ENCODE measurements at regions of chr10 and their contacts with region 1.

Region 1: DNA sequence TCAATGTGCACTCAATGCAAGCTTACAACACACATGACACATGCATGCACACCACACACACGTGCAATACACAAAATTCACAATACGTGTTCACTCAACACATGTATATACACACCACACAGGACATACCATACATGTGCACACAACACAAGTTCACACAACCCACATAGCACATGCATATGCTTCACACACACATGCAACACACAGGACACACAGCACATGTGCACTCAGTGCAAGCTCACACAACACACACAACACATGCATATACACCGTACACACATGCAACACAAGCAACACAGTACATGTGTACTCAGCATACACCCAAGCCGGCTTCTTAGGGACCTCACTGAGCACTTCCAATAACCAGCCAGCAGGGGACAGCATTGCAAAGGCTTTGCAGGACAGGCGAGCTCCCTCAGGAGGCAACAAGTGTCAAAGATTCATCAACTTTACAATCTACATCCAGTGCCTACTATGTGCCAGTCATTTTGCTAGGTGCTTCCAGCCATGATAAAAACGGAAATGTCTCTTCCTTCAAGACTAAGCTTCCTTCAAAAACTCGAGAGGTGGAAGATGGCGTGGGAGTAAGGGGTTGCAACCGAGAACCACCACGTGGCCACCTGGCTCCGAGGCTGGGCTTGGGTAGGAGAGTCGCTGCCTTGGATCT is 61.1 kb downstream of the JCAD start:
- DNase-seq: peak; percentile 74 to 86
- ATAC-seq: peak; percentile 18 to 23
- H3K4me3 ChIP-seq: no peak overlapping the region
- H3K27ac ChIP-seq: peak overlapping the region; percentile 30 to 98 (median 92)
- H3K4me1 ChIP-seq: peaks cover 60 to 66% of the 10 kb centered on the region in 2 donors
- H3K27me3 ChIP-seq: no peaks in the 10 kb centered on the region
- CTCF ChIP-seq: peak; percentile 96 to 99 (median 98)
- POLR2A ChIP-seq: no peak

Region 2: DNA sequence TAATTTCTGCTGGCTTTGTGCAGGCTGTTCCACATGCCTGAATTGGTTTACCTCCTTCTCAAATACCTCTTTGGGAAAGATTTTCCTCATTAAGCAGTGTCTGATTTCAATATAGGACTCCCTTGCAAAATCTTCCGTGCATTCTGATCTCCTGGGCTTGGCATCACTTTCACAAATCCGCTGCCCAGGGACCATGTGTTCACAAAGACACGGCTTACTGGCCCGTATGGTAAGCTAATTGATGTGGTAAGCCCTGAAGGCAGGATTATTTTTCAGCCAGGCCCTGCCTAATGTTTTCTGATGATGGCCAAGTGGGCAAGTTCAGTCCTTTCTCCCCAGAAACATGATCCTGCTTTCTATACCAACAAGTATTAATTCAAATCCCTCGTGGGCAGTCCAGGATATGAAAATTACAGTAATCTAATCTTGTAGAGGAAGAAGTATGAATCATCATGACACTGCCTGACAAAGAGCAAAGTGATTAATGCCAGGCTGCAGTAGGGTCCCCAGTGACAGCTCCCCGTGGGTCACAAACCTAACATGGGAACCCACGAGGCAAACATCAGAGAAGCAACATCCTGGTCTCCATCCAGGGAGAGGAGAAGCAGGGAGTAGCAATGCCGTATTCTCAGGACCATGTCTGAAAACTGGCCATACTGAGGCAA is 351.9 kb before region 1 on chr10:
- in situ Hi-C with region 1: no loop called
- intact Hi-C with region 1: loop called (anchors 5 kb)
- DNase-seq: peak; percentile 83 to 88
- ATAC-seq: peak; percentile 45 to 52
- H3K4me3 ChIP-seq: peak overlapping the region in 3 of 4 donors; percentile 21 to 40 (median 22)
- H3K27ac ChIP-seq: peak overlapping the region; percentile 95 to 96 (median 96)
- H3K4me1 ChIP-seq: peaks cover 61 to 69% of the 10 kb centered on the region in 2 donors
- H3K27me3 ChIP-seq: no peaks in the 10 kb centered on the region
- CTCF ChIP-seq: no peak
- POLR2A ChIP-seq: peak in 1 of 2 donors; percentile 47

Region 3: DNA sequence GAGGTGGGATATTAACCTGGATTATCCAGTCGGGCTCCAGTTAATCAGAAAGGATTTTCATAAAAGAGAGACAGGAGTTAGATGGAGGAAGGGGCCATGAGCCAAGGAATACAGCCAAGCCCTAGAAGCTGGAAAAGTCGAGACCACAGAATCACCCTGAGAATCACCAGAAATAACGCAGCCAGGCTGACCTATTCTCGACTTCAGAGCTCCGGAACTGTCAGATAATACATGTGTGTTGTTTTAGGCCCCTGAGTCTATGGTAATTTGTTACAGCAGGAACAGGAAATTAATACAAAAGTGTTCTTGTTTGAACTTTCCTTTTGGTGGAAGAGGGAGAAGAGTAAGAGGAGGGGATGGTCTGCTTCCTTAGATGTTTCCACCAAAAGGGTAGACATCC is 147.0 kb before region 1 on chr10:
- in situ Hi-C with region 1: no loop called
- intact Hi-C with region 1: no loop called
- DNase-seq: no peak
- ATAC-seq: no peak
- H3K4me3 ChIP-seq: no peak overlapping the region
- H3K27ac ChIP-seq: no peak overlapping the region
- H3K4me1 ChIP-seq: peaks cover 3 to 15% of the 10 kb centered on the region in 2 donors
- H3K27me3 ChIP-seq: no peaks in the 10 kb centered on the region
- CTCF ChIP-seq: no peak
- POLR2A ChIP-seq: no peak

Region 4: GRCh38 chr10:29921071-29921446 is 77.2 kb before region 1 on chr10:
- in situ Hi-C with region 1: no loop called
- intact Hi-C with region 1: loop called (anchors 5 kb)
- DNase-seq: peak in 1 of 2 donors; percentile 26
- ATAC-seq: peak in 1 of 2 donors; percentile 37
- H3K4me3 ChIP-seq: peak overlapping the region in 2 of 4 donors; percentile 5 to 24
- H3K27ac ChIP-seq: no peak overlapping the region
- H3K4me1 ChIP-seq: peaks cover 17 to 20% of the 10 kb centered on the region in 2 donors
- H3K27me3 ChIP-seq: no peaks in the 10 kb centered on the region
- CTCF ChIP-seq: no peak
- POLR2A ChIP-seq: no peak

Region 5: GRCh38 chr10:30011396-30011795 is 13.1 kb after region 1 on chr10:
- in situ Hi-C with region 1: no loop called
- intact Hi-C with region 1: no loop called
- DNase-seq: no peak
- ATAC-seq: no peak
- H3K4me3 ChIP-seq: no peak overlapping the region
- H3K27ac ChIP-seq: no peak overlapping the region
- H3K4me1 ChIP-seq: peaks cover 0 to 7% of the 10 kb centered on the region in 2 donors
- H3K27me3 ChIP-seq: no peaks in the 10 kb centered on the region
- CTCF ChIP-seq: no peak
- POLR2A ChIP-seq: no peak

Region 6: GRCh38 chr10:30022590-30022989 is 24.3 kb after region 1 on chr10:
- in situ Hi-C with region 1: no loop called
- intact Hi-C with region 1: loop called (anchors 2 kb)
- DNase-seq: no peak
- ATAC-seq: no peak
- H3K4me3 ChIP-seq: no peak overlapping the region
- H3K27ac ChIP-seq: no peak overlapping the region
- H3K4me1 ChIP-seq: peaks cover 0 to 8% of the 10 kb centered on the region in 2 donors
- H3K27me3 ChIP-seq: no peaks in the 10 kb centered on the region
- CTCF ChIP-seq: peak in 1 of 5 experiments; percentile 36
- POLR2A ChIP-seq: no peak

Region 7: GRCh38 chr10:30241422-30242110 is 243.3 kb after region 1 on chr10:
- in situ Hi-C with region 1: loop called (anchors 5 to 25 kb)
- intact Hi-C with region 1: loop called (anchors 1 kb)
- DNase-seq: no peak
- ATAC-seq: no peak
- H3K4me3 ChIP-seq: no peak overlapping the region
- H3K27ac ChIP-seq: no peak overlapping the region
- H3K4me1 ChIP-seq: no peaks in the 10 kb centered on the region
- H3K27me3 ChIP-seq: no peaks in the 10 kb centered on the region
- CTCF ChIP-seq: no peak
- POLR2A ChIP-seq: no peak

Region 8: GRCh38 chr10:30433730-30434272 is 435.5 kb after region 1 on chr10 and contains the start of gene MAP3K8:
- in situ Hi-C with region 1: no loop called
- intact Hi-C with region 1: loop called (anchors 10 kb)
- DNase-seq: peak; percentile 81 to 84
- ATAC-seq: peak; percentile 77 to 78
- H3K4me3 ChIP-seq: peak within 1 kb of the TSS; percentile 85 to 96 (median 90)
- H3K27ac ChIP-seq: peak within 1 kb of the TSS; percentile 94 to 98 (median 97)
- H3K4me1 ChIP-seq: peaks cover 36 to 49% of the 10 kb centered on the region in 2 donors
- H3K27me3 ChIP-seq: no peaks in the 10 kb centered on the region
- CTCF ChIP-seq: no peak
- POLR2A ChIP-seq: peak; percentile 61 to 79
- total RNA-seq, gene MAP3K8: 3.2 to 5.3 (median 4.2) TPM